Heart right ventricle (tissue), 16 donors: ENCODE measurements at regions of chr10 and their contacts with region 1.

Region 1: DNA sequence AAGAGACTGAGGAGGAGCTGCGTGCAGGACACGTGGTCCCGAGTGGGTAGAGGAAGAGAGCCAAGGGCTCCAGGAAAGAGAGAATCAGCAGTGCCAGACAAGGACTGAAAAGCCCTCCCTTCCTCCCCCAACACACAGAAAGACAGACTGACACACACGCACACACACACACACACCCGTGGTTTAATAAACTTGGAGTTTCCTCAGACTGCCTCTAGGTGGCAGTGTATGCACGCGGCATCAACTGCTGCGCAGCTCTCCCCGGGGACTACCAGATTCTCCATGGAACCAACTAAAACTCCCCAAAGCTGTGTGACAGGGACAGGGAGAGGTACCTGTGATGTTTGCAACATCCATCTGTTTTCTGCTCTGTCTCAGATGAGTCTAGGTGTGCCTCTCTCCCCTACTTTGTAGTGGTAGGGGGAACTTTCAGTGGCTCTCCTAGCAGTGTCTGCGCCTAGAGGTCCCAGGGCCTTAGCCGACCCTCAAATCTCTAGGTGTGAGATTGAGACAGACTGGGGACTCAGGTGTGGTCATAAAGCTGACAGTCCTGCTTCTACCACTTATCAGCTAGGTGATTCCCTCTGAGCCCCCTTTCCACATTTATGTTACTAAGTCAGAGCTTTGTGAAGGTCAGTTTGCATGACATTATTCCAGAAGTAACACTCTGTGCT is 9.3 kb upstream of the TSPAN14 start:
- DNase-seq: peak; percentile 57 to 78
- ATAC-seq: peak; percentile 90 to 97 (median 93)
- H3K4me3 ChIP-seq: no peak overlapping the region
- H3K27ac ChIP-seq: peak overlapping the region in 3 of 10 donors; percentile 21 to 51 (median 51)
- H3K4me1 ChIP-seq: peaks cover 0 to 37% (median 14%) of the 10 kb centered on the region in 9 donors
- H3K27me3 ChIP-seq: no peaks in the 10 kb centered on the region
- CTCF ChIP-seq: peak; percentile 63 to 94 (median 76)

Region 2: GRCh38 chr10:80382989-80383388 is 61.8 kb before region 1 on chr10:
- intact Hi-C with region 1: loop called in 8 of 10 experiments (anchors 1 to 10 kb)
- DNase-seq: peak in 1 of 2 donors; percentile 41
- ATAC-seq: peak in 1 of 8 donors; percentile 57
- H3K4me3 ChIP-seq: no peak overlapping the region
- H3K27ac ChIP-seq: no peak overlapping the region
- H3K4me1 ChIP-seq: peaks cover 0 to 18% (median 3%) of the 10 kb centered on the region in 9 donors
- H3K27me3 ChIP-seq: no peaks in the 10 kb centered on the region
- CTCF ChIP-seq: peak; percentile 40 to 83 (median 74)

Region 3: GRCh38 chr10:80498833-80499741 is 54.3 kb after region 1 on chr10:
- intact Hi-C with region 1: loop called in 6 of 10 experiments (anchors 2 to 5 kb)
- DNase-seq: peak; percentile 82 to 88
- ATAC-seq: peak; percentile 77 to 92 (median 84)
- H3K4me3 ChIP-seq: peak overlapping the region in 1 of 10 donors; percentile 10
- H3K27ac ChIP-seq: peak overlapping the region; percentile 58 to 92 (median 82)
- H3K4me1 ChIP-seq: peaks cover 49 to 100% (median 91%) of the 10 kb centered on the region in 9 donors
- H3K27me3 ChIP-seq: no peaks in the 10 kb centered on the region
- CTCF ChIP-seq: no peak

Region 4: DNA sequence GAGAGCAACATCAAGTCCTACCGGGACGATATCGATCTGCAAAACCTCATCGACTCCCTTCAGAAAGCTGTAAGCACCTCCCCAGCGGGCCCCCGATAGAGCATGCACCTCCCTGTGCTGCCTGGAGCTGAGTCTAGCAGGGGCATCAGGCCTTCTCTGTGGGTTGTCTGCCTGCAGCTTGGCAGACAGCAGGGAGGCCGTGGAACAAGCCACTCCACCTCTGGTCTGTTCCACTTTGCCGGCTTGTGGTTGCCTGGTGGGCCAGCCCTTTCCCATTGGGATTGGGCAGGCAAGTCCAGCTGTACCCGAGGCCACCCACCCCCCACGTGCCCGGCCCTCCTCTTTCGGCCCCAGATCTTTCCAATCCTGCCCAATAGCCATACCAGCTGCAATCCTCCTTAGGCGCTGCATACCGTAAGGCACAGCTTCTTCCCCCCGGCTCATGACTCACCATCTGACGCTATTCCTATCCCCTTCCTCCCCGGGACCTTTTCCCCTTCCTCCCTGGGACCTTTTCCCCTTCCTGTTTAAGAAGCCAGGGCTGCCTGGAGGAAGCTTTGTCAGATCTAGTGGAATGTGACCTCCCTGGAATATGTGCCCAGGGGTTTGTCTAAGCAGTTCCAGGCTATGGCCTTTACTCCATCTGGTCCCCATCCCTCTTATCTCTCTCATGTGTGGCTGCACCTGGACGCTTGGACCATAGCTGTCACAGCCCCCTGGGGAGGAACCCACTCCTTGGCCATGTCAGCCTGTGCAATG is 64.8 kb after region 1 on chr10:
- intact Hi-C with region 1: loop called (anchors 1 to 5 kb)
- DNase-seq: peak in 1 of 2 donors; percentile 73
- ATAC-seq: peak; percentile 53 to 86 (median 76)
- H3K4me3 ChIP-seq: peak overlapping the region in 1 of 10 donors; percentile 19
- H3K27ac ChIP-seq: peak overlapping the region; percentile 63 to 87 (median 76)
- H3K4me1 ChIP-seq: peaks cover 20 to 76% (median 67%) of the 10 kb centered on the region in 9 donors
- H3K27me3 ChIP-seq: no peaks in the 10 kb centered on the region
- CTCF ChIP-seq: no peak

Region 5: DNA sequence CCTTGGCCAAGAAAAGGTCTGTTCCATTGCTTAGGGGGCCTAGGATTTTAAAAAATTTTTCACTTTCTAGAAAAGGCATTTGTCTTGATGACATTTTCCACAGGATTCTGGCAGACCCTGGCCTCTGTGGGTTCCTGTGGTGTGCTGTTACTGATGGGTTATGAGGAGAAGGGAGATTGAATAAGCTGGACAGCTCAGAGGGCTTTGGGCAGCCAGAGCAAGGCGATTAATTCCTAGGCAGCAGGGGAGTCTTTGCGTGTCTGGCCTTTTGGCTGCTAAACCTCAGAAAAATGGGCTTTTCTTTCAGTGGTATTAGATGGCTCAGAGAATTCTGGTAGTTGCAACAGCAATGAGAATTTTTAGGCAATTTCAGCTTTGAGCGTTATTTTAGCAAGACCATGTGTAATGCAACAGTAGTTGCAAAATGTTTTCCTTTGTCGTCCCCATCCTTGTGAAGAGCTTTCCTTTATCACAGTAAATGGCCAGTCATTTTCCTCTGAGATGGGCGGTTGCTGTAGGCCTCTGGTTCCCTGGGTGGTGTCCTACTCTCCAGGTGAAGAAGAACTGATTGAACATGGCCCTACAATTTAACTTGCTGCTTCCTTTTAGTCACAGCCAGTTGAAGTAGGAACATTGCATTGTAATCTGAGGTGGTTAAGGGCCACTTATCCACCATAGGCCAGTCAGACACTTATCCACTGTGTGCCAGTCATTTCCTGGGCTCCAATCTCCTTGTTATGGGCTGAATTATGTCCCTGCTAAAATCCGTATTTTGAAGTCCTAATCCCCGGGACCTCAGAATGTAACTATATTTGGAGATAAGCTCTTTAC is 136.1 kb after region 1 on chr10:
- intact Hi-C with region 1: loop called in 4 of 10 experiments (anchors 1 to 5 kb)
- DNase-seq: no peak
- ATAC-seq: no peak
- H3K4me3 ChIP-seq: no peak overlapping the region
- H3K27ac ChIP-seq: no peak overlapping the region
- H3K4me1 ChIP-seq: peaks cover 0 to 16% (median 0%) of the 10 kb centered on the region in 9 donors
- H3K27me3 ChIP-seq: peaks cover 0 to 4% (median 0%) of the 10 kb centered on the region in 7 donors
- CTCF ChIP-seq: no peak

Region 6: GRCh38 chr10:80662577-80663261 is 217.9 kb after region 1 on chr10:
- intact Hi-C with region 1: loop called in 2 of 10 experiments (anchors 10 kb)
- DNase-seq: peak; percentile 79 to 85
- ATAC-seq: peak; percentile 78 to 94 (median 90)
- H3K4me3 ChIP-seq: peak overlapping the region in 7 of 10 donors; percentile 14 to 49 (median 42)
- H3K27ac ChIP-seq: peak overlapping the region in 9 of 10 donors; percentile 24 to 85 (median 71)
- H3K4me1 ChIP-seq: peaks cover 0 to 46% (median 6%) of the 10 kb centered on the region in 9 donors
- H3K27me3 ChIP-seq: peaks cover 0 to 5% (median 0%) of the 10 kb centered on the region in 7 donors
- CTCF ChIP-seq: peak; percentile 79 to 93 (median 87)

Region 7: GRCh38 chr10:80924063-80924952 is 479.5 kb after region 1 on chr10:
- intact Hi-C with region 1: loop called in 6 of 10 experiments (anchors 5 to 10 kb)
- DNase-seq: peak in 1 of 2 donors; percentile 51
- ATAC-seq: peak in 3 of 8 donors; percentile 42 to 65 (median 43)
- H3K4me3 ChIP-seq: no peak overlapping the region
- H3K27ac ChIP-seq: no peak overlapping the region
- H3K4me1 ChIP-seq: no peaks in the 10 kb centered on the region
- H3K27me3 ChIP-seq: peaks cover 0 to 19% (median 0%) of the 10 kb centered on the region in 7 donors
- CTCF ChIP-seq: peak; percentile 48 to 84 (median 74)